ENCODE measurements at regions of chr7 and their contacts with region 1.

Region 1: DNA sequence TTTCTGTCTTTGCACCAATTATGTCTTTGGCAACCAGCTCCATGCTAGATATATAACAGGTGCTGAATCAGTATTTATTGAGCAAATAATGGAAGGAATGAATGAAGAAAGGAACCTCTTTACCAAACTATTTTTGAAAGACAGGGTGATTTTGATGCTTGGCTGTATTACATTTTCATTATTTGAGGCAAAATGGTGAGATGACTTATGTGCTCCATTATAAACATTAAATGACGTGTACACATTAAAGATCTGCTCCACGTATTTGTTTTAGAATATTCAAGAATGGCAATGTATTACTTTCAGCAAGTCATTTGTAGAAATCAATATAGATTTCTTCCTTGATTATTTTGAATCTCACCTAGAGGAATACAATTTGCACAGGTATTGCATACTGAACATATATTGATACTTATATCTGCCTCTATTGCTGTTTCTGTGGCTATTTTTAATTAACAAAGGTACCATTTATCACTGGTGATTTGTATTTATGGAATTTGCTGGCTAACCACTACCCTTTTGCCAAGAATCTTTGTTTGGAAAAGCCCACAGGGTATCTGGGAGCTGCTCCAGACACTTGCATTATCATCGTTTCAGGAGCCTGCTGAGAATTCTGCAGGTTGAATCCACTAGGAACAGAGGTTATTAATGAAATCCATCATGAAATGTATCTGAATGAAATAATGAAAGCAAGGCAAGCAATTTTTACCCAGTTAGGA is 92.2 kb downstream of the SEMA3C start:
- DNase-seq: peak; percentile 79
- ATAC-seq: peak; percentile 57; the same call in 1 of the 2 replicates
- H3K4me3 ChIP-seq: no peak overlapping the region
- H3K27ac ChIP-seq: no peak overlapping the region
- H3K4me1 ChIP-seq: 0 out of 2 replicates have a peak, but pooled peaks cover 4% of the 10 kb centered on the region
- H3K27me3 ChIP-seq: no peaks in the 10 kb centered on the region
- CTCF ChIP-seq: no peak
- POLR2A ChIP-seq: no peak
- RAD21 ChIP-seq: no peak

Region 2: DNA sequence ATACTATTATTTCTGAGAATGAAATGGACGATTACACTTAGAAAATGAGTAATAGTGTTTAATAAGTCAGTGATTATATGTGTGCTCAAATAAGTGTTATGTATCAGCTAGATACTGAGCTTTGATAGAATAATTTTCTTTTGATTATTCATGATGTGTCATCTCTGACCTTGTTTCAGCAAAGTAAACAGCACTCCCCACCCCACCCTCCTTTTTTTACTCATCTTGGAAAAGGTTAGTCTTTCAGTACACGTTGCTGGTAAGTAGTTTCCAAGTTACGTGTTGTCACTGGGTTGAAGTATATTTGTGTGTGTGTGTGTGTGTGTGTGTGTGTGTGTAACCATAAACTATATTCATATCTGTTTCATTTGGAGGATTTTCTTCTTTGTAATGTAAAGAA is 608.0 kb before region 1 on chr7:
- CTCF ChIA-PET with region 1: no interaction called
- POLR2A ChIA-PET with region 1: no interaction called
- dilution Hi-C with region 1: no loop called
- in situ Hi-C with region 1: no loop called
- intact Hi-C with region 1: no loop called
- DNase-seq: peak; percentile 95
- ATAC-seq: peak; percentile 68
- H3K4me3 ChIP-seq: no peak overlapping the region
- H3K27ac ChIP-seq: no peak overlapping the region
- H3K4me1 ChIP-seq: no peaks in the 10 kb centered on the region
- H3K27me3 ChIP-seq: no peaks in the 10 kb centered on the region
- CTCF ChIP-seq: no peak
- POLR2A ChIP-seq: no peak
- RAD21 ChIP-seq: no peak

Region 3: DNA sequence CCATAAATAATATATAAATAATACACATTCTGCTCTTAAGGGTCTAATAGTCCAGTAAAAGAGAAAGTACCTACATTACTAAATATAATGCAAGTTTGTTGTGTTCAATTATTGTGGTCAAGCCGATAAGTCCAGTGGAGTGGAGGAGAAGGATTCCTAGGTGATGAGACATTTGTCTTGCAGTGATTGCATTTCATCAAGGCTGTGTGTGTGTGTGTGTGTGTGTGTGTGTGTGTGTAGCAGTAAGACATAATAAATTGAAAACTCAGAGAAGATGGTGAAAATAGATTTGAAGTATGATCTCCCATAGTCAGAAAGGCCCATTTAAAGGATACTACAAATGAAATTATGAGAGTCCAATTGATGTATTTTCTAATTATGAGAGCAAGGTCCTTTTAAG is 284.7 kb after region 1 on chr7:
- CTCF ChIA-PET with region 1: no interaction called
- POLR2A ChIA-PET with region 1: no interaction called
- dilution Hi-C with region 1: no loop called
- in situ Hi-C with region 1: no loop called
- intact Hi-C with region 1: loop called (anchors 10 kb)
- DNase-seq: peak; percentile 95
- ATAC-seq: peak; percentile 91
- H3K4me3 ChIP-seq: no peak overlapping the region
- H3K27ac ChIP-seq: no peak overlapping the region
- H3K4me1 ChIP-seq: peaks cover 2% of the 10 kb centered on the region; the same call in 1 of the 2 replicates
- H3K27me3 ChIP-seq: no peaks in the 10 kb centered on the region
- CTCF ChIP-seq: no peak
- POLR2A ChIP-seq: no peak
- RAD21 ChIP-seq: no peak

Measured in IMR-90 (cell line).